Heart right ventricle (tissue), 16 donors: ENCODE measurements at regions of chr1 and their contacts with region 1.

Region 1: DNA sequence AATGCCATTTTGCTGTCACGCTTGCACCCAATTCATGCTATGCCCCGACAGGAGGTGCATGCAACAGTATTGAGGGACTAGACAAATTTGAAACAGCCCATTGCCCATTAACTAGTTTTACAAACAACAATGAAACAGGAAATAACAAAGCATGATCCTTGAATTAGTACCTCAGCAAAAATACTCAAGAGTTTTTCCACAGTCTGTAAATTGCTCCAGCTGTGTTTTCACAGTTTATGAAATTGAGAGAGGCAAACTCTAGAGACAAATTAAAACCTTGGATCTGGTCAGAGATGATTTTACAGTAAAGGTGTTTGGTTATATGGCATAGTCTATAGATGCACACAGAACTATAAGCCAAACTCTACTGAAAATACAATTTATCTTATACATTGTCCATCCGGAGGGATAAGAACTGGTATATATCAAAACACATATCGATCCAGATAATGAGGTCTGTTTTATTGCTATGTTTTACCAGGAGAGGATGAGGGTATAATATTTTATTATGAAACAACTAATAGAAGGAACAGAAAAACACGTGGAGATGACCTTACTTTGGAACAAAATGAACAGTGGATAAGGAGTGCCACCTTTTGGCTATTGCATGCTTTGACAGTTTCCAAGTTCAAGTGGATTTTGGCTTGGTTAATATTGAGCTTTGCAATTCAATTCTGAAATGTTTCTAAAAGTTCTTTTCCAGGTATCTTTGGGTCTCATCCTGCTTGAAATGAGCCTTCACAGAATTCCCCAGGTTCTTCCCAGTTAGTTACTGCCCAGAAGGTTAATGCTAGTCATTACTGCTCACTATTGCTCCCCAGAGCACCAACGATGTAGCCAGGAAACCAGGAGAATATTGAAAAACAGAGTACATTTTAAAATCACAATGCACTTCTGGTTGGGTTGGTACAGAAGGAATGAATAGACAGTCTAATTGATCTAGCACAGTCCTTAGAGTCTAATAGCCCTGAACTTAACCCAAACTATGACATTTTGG is 45.7 kb downstream of the ZC3H11B start:
- DNase-seq: peak in 1 of 2 donors; percentile 15
- ATAC-seq: peak in 7 of 8 donors; percentile 44 to 77 (median 65)
- H3K4me3 ChIP-seq: no peak overlapping the region
- H3K27ac ChIP-seq: no peak overlapping the region
- H3K4me1 ChIP-seq: peaks cover 0 to 8% (median 0%) of the 10 kb centered on the region in 9 donors
- H3K27me3 ChIP-seq: no peaks in the 10 kb centered on the region
- CTCF ChIP-seq: peak in 8 of 9 donors; percentile 19 to 71 (median 58)

Region 2: GRCh38 chr1:219812491-219813203 is 245.4 kb after region 1 on chr1:
- intact Hi-C with region 1: loop called in 5 of 10 experiments (anchors 5 to 10 kb)
- DNase-seq: peak in 1 of 2 donors; percentile 21
- ATAC-seq: peak in 7 of 8 donors; percentile 70 to 83 (median 80)
- H3K4me3 ChIP-seq: no peak overlapping the region
- H3K27ac ChIP-seq: no peak overlapping the region
- H3K4me1 ChIP-seq: peaks cover 0 to 11% (median 4%) of the 10 kb centered on the region in 9 donors
- H3K27me3 ChIP-seq: peaks cover 0 to 10% (median 0%) of the 10 kb centered on the region in 7 donors
- CTCF ChIP-seq: peak; percentile 58 to 88 (median 79)